RWPE1 (cell line): ENCODE measurements at regions of chr10 and their contacts with region 1.

Region 1: GRCh38 chr10:97117372-97117771 is 68.4 kb downstream of the SLIT1 start:
- DNase-seq: peak; percentile 53
- H3K27ac ChIP-seq: no peak overlapping the region
- CTCF ChIP-seq: no peak

Region 2: DNA sequence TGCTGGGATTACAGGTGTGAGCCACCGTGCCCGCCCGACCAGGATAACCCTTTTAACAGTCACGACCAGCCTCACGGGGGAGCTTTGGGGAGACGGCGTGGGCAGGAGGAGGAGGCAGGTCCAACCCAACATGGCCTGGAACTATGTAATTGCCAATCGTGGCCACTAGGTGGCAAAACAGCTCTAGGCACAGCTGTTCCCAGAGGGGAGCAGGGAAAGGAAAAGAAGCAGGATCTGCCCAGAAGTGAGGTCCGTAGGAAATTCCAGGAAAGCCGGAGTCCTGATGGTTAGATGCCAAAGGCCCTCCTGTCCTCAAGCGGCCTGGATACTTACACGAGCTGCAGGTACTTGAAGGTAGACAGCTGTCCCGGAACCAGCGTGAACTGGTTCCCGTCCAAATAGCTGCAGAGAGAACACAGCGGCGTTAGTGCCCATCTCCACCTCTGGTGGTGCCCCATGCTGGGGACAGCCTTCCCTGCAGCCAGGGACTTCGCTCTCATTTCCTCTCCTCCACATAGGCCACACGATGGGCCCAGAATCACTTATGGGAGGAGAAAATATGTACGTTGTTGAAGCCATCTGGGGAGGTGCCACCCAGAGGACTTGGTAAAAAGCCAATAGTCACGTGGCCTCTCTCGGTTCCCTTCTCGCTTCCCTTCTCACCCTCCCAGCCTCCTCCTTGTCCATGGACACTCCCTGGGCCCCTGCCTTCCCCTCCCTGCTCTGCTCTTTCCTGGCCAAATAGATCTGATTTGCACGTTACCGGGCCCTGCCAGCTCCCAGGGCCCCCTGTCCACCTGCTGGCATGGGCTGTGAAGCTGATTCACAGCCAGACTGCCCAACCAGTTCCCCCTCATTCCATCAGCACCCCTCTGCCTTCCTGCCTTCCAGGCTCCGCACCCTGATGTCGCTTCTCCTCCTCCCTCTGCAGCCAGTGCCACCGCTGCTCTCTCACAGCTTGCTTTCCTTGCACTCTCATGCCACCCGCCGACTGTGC is 79.7 kb before region 1 on chr10:
- CTCF ChIA-PET with region 1: interaction called, 16 read pairs
- POLR2A ChIA-PET with region 1: no interaction called
- DNase-seq: peak; percentile 91
- H3K27ac ChIP-seq: peak overlapping the region; percentile 39; the same call in 1 of the 2 replicates
- CTCF ChIP-seq: peak; percentile 90

Region 3: GRCh38 chr10:97081621-97082235 is 35.6 kb before region 1 on chr10:
- CTCF ChIA-PET with region 1: interaction called, 10 read pairs
- POLR2A ChIA-PET with region 1: no interaction called
- DNase-seq: peak; percentile 68
- H3K27ac ChIP-seq: no peak overlapping the region
- CTCF ChIP-seq: peak; percentile 60

Region 4: GRCh38 chr10:97291357-97292096 is 174.2 kb after region 1 on chr10:
- CTCF ChIA-PET with region 1: no interaction called
- POLR2A ChIA-PET with region 1: no interaction called
- DNase-seq: no peak
- H3K27ac ChIP-seq: peak overlapping the region; percentile 99
- CTCF ChIP-seq: no peak